ENCODE measurements at regions of chr5 and their contacts with region 1.

Region 1: DNA sequence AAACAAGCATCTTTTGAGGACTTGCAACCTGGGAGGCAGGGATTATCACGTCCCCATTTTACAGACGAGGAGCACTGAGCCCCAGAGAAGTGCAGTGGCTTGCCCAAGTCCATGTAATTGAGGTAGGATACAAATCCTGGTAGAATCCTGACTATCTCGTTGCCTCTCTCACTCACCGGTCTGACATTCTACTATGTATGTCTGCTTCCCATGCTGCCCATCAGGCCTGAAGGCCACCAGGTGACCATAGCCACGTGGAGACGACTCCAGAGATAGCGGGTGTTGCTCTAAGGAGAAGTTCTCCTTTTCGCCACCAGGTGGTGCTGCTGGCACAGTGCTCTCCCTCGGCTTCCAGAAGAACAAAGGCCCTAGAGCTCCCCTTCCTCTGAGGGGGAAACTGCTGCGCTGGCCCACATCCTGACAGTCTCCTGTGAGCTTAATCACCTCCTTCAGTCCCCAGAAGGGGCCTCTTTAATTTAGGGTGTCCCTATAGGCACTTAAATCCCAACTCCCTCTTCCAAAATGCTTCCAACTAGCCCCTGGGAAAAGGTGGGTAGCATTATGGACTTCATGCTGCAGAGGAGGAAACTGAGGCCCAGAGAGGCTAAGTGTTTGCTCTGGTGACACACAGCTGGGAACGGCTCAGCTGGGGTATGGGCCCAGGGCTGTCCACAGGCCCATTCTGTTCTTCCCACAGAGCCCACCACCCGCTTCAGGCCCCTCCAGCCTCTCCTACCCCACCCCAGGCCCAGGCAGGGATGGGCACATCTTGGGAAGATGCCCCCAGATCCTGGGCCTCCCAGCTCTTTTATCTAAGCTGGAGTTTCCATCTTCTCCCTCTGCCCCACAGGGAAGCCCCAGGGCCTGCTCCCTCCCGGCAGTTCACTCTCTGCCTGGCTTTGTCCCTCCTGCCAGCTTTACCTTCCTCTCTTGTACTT is 6.4 kb downstream of the SLC34A1 start:
- DNase-seq: peak; percentile 89 to 95
- H3K4me3 ChIP-seq: no peak overlapping the region
- H3K27ac ChIP-seq: no peak overlapping the region
- H3K4me1 ChIP-seq: peaks cover 0 to 3% (median 0%) of the 10 kb centered on the region in 4 experiments; a peak in 4 of 7 replicates
- H3K27me3 ChIP-seq: peaks cover 0 to 17% (median 10%) of the 10 kb centered on the region in 4 experiments; a peak in 6 of 7 replicates
- CTCF ChIP-seq: peak in 2 of 3 experiments; percentile 97; a peak in 3 of 4 replicates
- EP300 ChIP-seq: no peak
- POLR2A ChIP-seq: no peak
- RAD21 ChIP-seq: peak; percentile 93 to 97

Region 2: DNA sequence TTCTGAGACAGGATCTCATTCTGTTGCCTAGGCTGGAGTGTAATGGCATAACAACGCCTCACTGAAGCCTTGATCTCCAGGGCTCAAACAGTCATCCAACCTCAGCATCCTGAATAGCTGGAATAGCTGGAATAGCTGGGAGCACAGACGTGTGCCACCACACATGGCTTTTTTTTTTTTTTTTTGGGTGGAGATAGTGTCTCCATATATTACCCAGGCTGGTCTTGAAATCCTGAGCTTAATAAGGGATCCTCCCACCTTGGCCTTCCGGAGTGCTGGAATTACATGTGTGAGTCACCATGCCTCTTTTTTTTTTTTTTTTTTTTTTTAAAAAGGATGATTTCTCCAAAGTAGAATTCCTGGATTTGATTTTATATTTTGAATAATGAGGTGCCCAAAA is 196.4 kb before region 1 on chr5:
- CTCF ChIA-PET with region 1: no interaction called
- POLR2A ChIA-PET with region 1: no interaction called
- DNase-seq: peak in 1 of 2 experiments; percentile 2
- H3K4me3 ChIP-seq: no peak overlapping the region
- H3K27ac ChIP-seq: no peak overlapping the region
- H3K4me1 ChIP-seq: no peaks in the 10 kb centered on the region
- H3K27me3 ChIP-seq: no peaks in the 10 kb centered on the region
- CTCF ChIP-seq: no peak
- EP300 ChIP-seq: no peak
- POLR2A ChIP-seq: no peak
- RAD21 ChIP-seq: no peak

Region 3: DNA sequence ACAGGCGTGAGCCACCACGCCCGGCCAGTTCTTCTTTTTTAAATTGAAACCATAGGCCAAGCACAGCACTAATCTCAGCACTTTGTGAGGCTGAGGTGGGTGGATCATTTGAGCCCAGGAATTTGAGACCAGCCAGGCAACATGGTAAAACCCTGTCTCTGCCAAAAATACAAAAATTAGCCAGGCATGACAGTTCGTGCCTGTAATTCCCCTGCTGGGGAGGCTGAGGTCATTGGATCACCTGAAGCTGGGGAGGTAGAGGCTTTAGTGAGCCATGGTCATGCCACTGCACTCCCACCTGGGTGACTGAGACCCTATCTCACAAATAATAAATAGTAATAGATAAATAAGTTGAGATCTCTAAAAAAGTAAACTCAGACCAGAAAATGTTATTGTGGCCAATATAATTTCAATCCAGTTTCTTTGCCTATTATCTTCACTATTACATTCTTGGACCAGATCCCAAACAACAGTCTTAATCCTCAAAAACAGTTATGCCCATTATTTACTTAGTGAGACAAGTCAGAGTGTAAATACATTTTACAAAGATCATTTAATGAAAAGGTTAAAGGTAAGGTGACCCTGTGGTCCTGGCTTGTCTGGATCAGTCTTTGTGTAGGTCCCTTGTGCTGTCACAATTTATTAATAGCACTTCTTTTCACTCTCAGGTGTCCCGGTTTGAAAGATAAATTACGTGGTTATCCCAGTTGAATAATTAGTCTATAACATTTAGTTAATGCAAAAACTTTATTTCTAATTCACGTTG is 140.7 kb before region 1 on chr5:
- CTCF ChIA-PET with region 1: no interaction called
- POLR2A ChIA-PET with region 1: no interaction called
- DNase-seq: no peak
- H3K4me3 ChIP-seq: no peak overlapping the region
- H3K27ac ChIP-seq: no peak overlapping the region
- H3K4me1 ChIP-seq: no peaks in the 10 kb centered on the region
- H3K27me3 ChIP-seq: no peaks in the 10 kb centered on the region
- CTCF ChIP-seq: no peak
- EP300 ChIP-seq: no peak
- POLR2A ChIP-seq: no peak
- RAD21 ChIP-seq: no peak

Region 4: DNA sequence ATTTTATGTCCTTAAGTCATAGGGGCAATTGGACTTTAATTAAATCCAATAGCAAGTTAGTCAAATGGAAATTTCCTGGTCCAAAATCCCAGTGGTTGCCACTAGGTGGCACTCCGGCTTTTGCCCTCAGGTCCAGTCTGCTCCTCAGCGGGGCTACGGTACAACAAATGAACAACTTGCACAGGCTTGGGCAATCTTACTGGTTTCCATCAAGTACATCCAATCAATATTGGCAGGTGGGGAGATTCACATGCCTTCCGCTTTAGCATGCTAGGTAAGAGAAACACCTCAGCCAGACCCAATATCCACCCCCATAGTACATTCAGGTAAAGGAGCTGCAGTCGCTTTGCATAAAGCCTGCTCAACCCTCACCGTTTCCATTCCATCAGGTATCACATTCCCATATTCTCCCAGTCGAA is 72.7 kb before region 1 on chr5:
- CTCF ChIA-PET with region 1: interaction called, 23 read pairs
- POLR2A ChIA-PET with region 1: no interaction called
- DNase-seq: peak in 1 of 2 experiments; percentile 87
- H3K4me3 ChIP-seq: no peak overlapping the region
- H3K27ac ChIP-seq: no peak overlapping the region
- H3K4me1 ChIP-seq: peaks cover 0 to 4% (median 1%) of the 10 kb centered on the region in 4 experiments; a peak in 4 of 7 replicates
- H3K27me3 ChIP-seq: no peaks in the 10 kb centered on the region
- CTCF ChIP-seq: peak in 2 of 3 experiments; percentile 85 to 89; a peak in 3 of 4 replicates
- EP300 ChIP-seq: no peak
- POLR2A ChIP-seq: no peak
- RAD21 ChIP-seq: peak; percentile 87 to 90

Region 5: DNA sequence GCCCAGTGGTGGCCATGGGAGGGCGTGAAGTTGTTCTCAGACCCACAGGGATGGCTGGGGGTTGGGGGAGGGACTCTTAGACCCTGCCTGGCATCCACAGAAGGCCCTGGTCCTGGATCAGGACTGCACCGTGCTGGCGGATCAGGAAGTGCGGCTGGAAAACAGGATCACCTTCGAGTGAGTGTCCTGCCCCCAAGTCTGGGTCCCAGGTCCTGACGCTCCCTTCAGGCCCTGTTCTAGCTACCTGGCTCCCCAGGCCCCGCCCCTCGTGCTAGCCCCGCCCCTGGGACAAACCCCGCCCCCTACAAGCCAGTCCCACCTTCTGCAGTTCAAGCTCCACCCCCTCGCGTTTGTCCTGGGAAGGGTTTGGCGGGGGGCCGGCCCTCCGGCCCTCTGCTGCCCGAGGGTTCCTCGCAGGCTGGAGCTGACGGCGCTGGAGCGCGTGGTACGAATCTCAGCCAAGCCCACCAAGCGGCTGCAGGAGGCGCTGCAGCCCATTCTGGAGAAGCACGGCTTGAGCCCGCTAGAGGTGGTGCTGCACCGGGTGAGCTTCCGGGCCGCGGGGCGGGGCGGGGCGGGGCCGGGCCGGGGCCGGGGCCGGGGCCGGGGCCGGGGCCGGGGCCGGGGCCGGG is 20.0 kb before region 1 on chr5:
- CTCF ChIA-PET with region 1: interaction called, 363 read pairs
- POLR2A ChIA-PET with region 1: interaction called, 9 read pairs
- DNase-seq: peak; percentile 93 to 99
- H3K4me3 ChIP-seq: peak overlapping the region; percentile 23 to 63 (median 58); a peak in 6 of 8 replicates
- H3K27ac ChIP-seq: 0 out of 2 replicates have a peak overlapping the region, but pooled peaks have one; percentile 60
- H3K4me1 ChIP-seq: peaks cover 8 to 36% (median 31%) of the 10 kb centered on the region in 4 experiments
- H3K27me3 ChIP-seq: peaks cover 1 to 14% (median 12%) of the 10 kb centered on the region in 4 experiments; a peak in 4 of 7 replicates
- CTCF ChIP-seq: peak in 2 of 3 experiments; percentile 79 to 98; a peak in 3 of 4 replicates
- EP300 ChIP-seq: no peak
- POLR2A ChIP-seq: 0 out of 3 replicates have a peak, but pooled peaks of 1 of the 2 experiments have one; percentile 16
- RAD21 ChIP-seq: peak; percentile 66 to 75

Region 6: GRCh38 chr5:177419051-177419450 is 28.4 kb after region 1 on chr5:
- CTCF ChIA-PET with region 1: interaction called, 15 read pairs
- POLR2A ChIA-PET with region 1: interaction called, 5 read pairs
- DNase-seq: no peak
- H3K4me3 ChIP-seq: no peak overlapping the region
- H3K27ac ChIP-seq: no peak overlapping the region
- H3K4me1 ChIP-seq: no peaks in the 10 kb centered on the region; a peak in 1 of 7 replicates
- H3K27me3 ChIP-seq: no peaks in the 10 kb centered on the region
- CTCF ChIP-seq: no peak
- EP300 ChIP-seq: no peak
- POLR2A ChIP-seq: no peak
- RAD21 ChIP-seq: no peak

Region 7: GRCh38 chr5:177431317-177432142 is 40.9 kb after region 1 on chr5:
- CTCF ChIA-PET with region 1: interaction called, 430 read pairs
- POLR2A ChIA-PET with region 1: interaction called, 5 read pairs
- DNase-seq: no peak
- H3K4me3 ChIP-seq: no peak overlapping the region
- H3K27ac ChIP-seq: no peak overlapping the region
- H3K4me1 ChIP-seq: peaks cover 0 to 14% (median 9%) of the 10 kb centered on the region in 4 experiments; a peak in 5 of 7 replicates
- H3K27me3 ChIP-seq: no peaks in the 10 kb centered on the region
- CTCF ChIP-seq: no peak
- EP300 ChIP-seq: no peak
- POLR2A ChIP-seq: no peak
- RAD21 ChIP-seq: no peak

Region 8: DNA sequence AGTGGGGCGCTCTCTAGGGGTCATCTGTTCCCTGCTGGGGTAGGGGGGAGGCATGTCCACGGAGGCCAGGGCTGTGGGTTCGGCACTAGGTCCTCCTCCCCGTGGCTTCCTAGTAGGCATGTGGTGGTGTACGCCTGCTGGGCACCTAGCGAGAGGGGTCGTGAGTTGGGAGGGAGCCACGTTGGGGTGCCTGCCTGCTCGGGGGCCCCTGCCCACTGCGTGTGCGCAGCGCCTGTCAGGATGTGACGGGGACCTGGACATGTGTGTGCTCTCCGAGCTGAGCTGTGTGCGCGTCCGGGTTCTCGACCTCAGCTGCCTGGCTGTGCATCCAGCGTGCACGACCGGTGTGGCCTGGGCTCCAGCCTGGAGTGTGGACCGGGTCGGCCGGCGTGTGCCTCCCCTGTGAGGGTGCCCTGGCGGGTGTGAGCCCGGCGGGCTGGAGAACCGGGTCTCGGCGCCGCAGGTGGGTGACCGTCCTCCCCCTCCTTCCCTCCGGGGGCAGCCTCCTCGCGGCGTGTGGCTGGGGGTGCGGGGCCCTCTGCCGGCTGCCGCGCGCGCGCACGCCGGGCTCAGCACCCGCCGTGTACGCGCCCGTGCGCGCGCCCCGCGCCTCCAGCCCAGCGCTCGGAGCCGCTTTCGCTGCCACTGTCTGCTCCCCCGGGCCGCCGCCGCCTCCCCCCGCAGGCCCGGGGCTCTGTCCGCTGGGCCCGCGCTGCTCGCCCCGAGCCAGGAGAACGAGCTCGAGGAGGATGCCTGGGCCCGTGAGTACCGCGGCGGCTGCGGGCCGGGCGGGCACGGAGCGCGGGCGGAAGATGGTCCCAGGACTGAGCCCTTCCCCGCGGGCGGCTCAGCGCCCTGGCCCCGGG is 55.8 kb after region 1 on chr5 and contains the start of gene PRR7:
- CTCF ChIA-PET with region 1: interaction called, 430 read pairs
- POLR2A ChIA-PET with region 1: interaction called, 51 read pairs
- DNase-seq: peak in 1 of 2 experiments; percentile 81
- H3K4me3 ChIP-seq: peak within 1 kb of the TSS; percentile 46 to 74 (median 64)
- H3K27ac ChIP-seq: peak within 1 kb of the TSS; percentile 59
- H3K4me1 ChIP-seq: peaks cover 0 to 30% (median 15%) of the 10 kb centered on the region in 4 experiments; a peak in 6 of 7 replicates
- H3K27me3 ChIP-seq: peaks cover 0 to 13% (median 5%) of the 10 kb centered on the region in 4 experiments; a peak in 5 of 7 replicates
- CTCF ChIP-seq: no peak
- EP300 ChIP-seq: no peak
- POLR2A ChIP-seq: peak in 1 of 2 experiments; percentile 75; a peak in 2 of 3 replicates
- RAD21 ChIP-seq: no peak
- total RNA-seq, gene PRR7: 8.0 and 8.6 TPM in 2 replicates

Region 9: DNA sequence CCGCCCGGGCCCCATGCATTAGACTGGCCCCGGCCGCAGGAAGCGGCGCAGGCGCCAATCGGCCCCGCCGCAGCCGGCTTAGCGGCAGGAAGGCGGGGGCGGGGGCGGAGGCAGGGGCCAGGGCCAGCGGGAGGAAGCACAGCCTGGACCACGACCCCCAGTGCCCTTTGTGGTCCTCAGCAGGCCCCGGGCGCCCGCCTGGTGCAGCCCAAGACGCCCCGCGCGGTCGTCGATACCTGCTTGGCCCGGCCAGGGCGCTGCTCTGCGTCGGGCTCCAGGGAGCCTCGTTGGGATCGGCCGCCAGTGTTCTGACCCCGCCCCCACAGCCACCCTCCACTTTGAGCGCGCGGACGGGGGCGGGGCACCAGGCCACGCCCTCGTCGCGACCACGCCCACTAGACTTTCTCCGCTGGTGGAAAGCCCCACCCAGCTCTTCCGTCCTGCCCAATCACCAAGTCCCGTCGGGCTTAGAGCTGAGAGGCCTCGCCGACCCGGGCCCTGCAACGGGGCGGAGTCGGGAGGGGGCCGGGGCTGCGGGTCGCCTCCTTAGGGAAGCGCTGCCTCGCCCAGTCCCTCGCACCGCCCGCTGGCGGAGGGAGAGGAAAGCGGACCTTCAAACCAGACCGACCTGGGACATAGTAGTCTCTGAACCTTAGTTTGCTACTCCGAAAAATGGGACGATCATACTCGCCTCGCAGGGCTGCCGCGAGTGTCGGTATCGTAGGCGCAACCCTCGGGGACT is 106.8 kb after region 1 on chr5 and contains the start of gene PDLIM7:
- CTCF ChIA-PET with region 1: interaction called, 20 read pairs
- POLR2A ChIA-PET with region 1: interaction called, 4 read pairs
- DNase-seq: peak; percentile 98 to 99
- H3K4me3 ChIP-seq: peak within 1 kb of the TSS; percentile 61 to 83 (median 68)
- H3K27ac ChIP-seq: peak within 1 kb of the TSS; percentile 98
- H3K4me1 ChIP-seq: peaks cover 0 to 31% (median 27%) of the 10 kb centered on the region in 4 experiments; a peak in 6 of 7 replicates
- H3K27me3 ChIP-seq: peaks cover 2 to 12% (median 11%) of the 10 kb centered on the region in 4 experiments; a peak in 6 of 7 replicates
- CTCF ChIP-seq: peak in 1 of 3 experiments; percentile 7; a peak in 1 of 4 replicates
- EP300 ChIP-seq: no peak
- POLR2A ChIP-seq: peak in 1 of 2 experiments; percentile 91; a peak in 1 of 3 replicates
- RAD21 ChIP-seq: no peak
- total RNA-seq, gene PDLIM7: 86.7 and 94.2 TPM in 2 replicates

Region 10: GRCh38 chr5:177516604-177517568 is 126.3 kb after region 1 on chr5 and contains the start of gene DDX41:
- CTCF ChIA-PET with region 1: no interaction called
- POLR2A ChIA-PET with region 1: no interaction called
- DNase-seq: peak; percentile 90 to 97
- H3K4me3 ChIP-seq: peak within 1 kb of the TSS; percentile 82 to 98 (median 96)
- H3K27ac ChIP-seq: peak within 1 kb of the TSS; percentile 76
- H3K4me1 ChIP-seq: peaks cover 0 to 6% (median 5%) of the 10 kb centered on the region in 4 experiments; a peak in 5 of 7 replicates
- H3K27me3 ChIP-seq: no peaks in the 10 kb centered on the region
- CTCF ChIP-seq: no peak
- EP300 ChIP-seq: no peak
- POLR2A ChIP-seq: peak in 1 of 2 experiments; percentile 25; a peak in 1 of 3 replicates
- RAD21 ChIP-seq: no peak
- total RNA-seq, gene DDX41: 101 and 102 TPM in 2 replicates